PC-3 (cell line): ENCODE measurements at regions of chr5 and their contacts with region 1.

Region 1: DNA sequence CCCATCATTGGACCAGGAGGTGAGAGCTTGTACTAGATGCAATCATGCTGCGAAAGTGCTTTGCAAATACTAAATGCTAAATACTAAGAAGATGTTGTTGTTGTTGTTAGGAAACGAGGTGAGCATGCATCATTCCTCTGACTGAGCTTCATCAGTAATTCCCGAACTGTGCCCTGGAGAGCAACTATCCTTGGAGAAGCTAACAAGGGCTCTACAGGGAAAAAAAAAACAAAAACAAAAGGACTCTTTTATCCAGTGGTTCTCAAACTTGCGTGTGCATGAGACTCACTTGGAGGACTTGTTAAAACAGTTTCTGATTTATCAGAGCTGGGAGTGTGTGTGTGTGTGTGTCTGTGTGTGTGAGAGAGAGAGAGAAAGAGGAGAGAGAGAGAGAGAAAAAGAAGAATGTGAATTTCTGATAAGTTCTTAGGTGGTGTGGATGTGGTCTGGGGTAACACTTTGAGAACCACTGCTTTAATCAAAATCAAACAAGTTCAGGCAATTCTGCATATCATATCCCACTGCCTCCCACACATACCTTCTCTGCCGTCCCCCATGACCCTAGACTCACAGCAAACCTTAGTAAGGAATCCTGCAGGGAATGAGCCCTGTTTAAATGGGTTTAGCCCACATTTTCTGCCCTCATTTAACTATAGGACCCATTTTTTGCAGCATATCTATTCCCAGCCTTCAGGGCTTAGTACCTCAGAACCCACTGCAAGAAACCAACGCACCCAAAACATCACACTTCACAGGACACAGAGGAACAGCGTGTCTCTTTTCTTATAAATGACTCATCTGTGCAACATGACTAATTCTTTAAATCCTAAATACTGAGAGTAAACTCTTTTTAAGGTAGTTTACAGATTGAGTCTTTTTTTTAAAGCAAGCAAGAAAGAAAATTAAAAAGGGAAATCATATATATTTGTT is 48.9 kb downstream of the PDE6A start:
- DNase-seq: peak; percentile 59
- ATAC-seq: peak; percentile 96
- H3K4me3 ChIP-seq: no peak overlapping the region
- H3K27ac ChIP-seq: no peak overlapping the region
- H3K4me1 ChIP-seq: peaks cover 11% of the 10 kb centered on the region
- H3K27me3 ChIP-seq: no peaks in the 10 kb centered on the region
- CTCF ChIP-seq: no peak

Region 2: DNA sequence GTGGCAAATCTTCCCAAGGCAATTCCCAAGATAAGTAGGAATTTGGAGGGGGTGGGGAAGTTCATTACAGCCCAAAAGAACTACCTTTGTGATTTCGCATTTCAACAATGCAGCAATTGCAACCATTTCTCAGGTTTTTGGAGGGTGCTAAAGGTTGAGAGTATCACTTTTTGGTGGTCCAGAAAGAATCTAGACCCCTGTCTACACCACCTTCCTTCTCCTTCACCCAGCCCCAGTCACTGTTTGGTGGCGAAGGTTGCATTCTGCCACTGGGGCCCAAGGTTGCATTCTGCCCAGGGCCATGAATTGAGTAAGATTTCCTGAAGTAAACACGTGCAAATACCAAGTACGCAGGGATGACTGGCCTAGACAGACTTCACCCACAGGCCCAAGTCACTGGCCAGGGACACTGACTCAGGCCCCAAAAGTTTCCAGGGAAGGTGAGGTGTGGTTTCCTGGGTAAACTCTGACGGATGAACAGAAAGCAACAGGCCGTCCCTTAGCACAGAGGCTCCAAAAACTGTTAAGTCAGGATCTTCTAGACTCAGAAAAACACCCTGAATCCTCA is 43.2 kb after region 1 on chr5:
- CTCF ChIA-PET with region 1: interaction called, 3 read pairs
- POLR2A ChIA-PET with region 1: no interaction called
- intact Hi-C with region 1: loop called (anchors 2 kb)
- DNase-seq: peak; percentile 100
- ATAC-seq: peak; percentile 83
- H3K4me3 ChIP-seq: peak overlapping the region; percentile 55
- H3K27ac ChIP-seq: peak overlapping the region; percentile 91
- H3K4me1 ChIP-seq: peaks cover 60% of the 10 kb centered on the region
- H3K27me3 ChIP-seq: no peaks in the 10 kb centered on the region
- CTCF ChIP-seq: no peak

Region 3: DNA sequence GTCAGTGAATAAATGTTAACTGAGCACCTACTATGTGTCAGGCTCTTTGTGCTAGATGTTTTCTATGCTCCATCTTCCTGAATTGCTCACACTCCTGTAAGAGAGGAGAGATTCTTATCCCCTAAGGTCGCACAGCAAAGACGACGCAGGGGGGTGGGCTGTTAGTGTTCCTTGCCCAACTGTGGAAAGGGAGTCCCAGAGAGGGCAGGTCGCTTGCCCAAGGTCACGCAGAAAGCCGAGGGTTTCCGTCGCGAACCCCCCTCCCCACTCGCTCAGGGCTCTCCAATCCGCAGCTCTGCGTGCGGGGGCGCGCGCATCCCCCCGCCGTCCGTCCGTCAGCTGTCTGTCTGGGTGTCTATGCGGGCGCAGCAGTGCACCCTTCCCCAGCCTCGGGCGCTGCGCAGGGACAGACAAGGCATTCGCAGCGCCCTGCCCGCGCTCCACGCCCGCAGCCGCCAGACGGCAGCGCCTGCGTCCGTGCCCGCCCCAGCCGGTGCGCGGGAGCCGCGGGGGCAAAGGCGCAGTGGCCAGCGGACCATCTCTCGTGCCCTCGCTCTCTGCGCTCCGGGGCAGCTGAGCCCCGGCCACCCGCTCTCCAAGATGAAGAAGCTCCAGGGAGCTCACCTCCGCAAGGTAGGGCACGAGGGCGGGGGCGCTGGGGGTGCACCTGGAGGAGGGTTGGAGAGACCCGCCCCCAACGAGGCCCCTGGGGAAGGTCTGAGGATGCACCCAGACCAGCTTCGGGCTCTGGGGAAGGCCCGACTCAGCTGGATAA is 294.2 kb after region 1 on chr5 and contains the start of gene SLC6A7:
- CTCF ChIA-PET with region 1: no interaction called
- POLR2A ChIA-PET with region 1: no interaction called
- intact Hi-C with region 1: no loop called
- DNase-seq: no peak
- ATAC-seq: no peak
- H3K4me3 ChIP-seq: no peak within 1 kb of the TSS
- H3K27ac ChIP-seq: no peak within 1 kb of the TSS
- H3K4me1 ChIP-seq: no peaks in the 10 kb centered on the region
- H3K27me3 ChIP-seq: peaks cover 35% of the 10 kb centered on the region
- CTCF ChIP-seq: no peak
- total RNA-seq, gene SLC6A7: 0.29 and 0.35 TPM in 2 replicates